Activated CD4-positive, alpha-beta T cell treated with anti-CD3 and anti-CD28 coated beads for 36 hours (primary cell): ENCODE measurements at regions of chr6 and their contacts with region 1.

Region 1: DNA sequence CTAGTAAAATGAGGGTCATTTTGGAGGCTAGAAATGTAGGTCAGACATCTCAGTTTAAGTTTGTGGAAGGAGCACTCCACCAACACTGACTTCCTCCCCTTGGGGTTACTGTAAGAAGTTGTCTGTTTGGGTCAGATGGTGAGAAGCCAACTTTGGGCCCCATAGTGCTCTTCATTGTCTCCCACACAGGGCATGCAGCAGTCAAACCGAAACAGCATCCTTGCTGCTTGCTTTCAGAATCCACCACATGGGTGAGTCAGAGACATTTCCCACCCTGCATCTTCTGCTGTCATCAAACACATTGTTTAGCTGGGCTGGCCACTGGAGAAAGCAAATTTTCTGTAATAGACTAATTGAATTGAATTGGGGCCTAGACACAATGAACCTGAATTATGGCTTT is 16.8 kb downstream of the IL17F start:
- DNase-seq: peak; percentile 88
- ATAC-seq: peak; percentile 95
- H3K4me3 Mint-ChIP-seq: no peak overlapping the region
- H3K27ac Mint-ChIP-seq: no peak overlapping the region
- H3K4me1 Mint-ChIP-seq: peaks cover 35% of the 10 kb centered on the region
- H3K27me3 Mint-ChIP-seq: peaks cover 41% of the 10 kb centered on the region

Region 2: DNA sequence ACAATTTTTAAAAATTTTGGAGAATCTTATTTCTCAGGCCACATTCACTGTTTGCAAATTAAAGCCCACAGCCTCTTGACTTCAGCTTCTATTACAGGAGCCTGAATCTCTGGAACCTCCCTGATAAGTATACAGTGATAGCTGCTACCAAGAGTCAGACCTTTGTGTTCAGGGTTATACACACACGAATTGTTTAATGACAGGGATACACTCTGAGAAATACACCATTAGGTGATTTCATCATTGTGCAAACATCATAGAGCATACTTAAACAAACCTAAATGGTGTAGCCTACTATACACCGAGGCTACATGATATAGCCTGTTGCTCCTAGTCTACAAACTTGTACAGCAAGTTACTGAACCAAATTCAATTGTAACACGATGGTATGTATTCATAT is 613.9 kb before region 1 on chr6:
- CTCF ChIA-PET with region 1: no interaction called
- POLR2A ChIA-PET with region 1: no interaction called
- intact Hi-C with region 1: no loop called
- DNase-seq: no peak
- ATAC-seq: no peak
- H3K4me3 Mint-ChIP-seq: no peak overlapping the region
- H3K27ac Mint-ChIP-seq: no peak overlapping the region
- H3K4me1 Mint-ChIP-seq: no peaks in the 10 kb centered on the region
- H3K27me3 Mint-ChIP-seq: no peaks in the 10 kb centered on the region

Region 3: DNA sequence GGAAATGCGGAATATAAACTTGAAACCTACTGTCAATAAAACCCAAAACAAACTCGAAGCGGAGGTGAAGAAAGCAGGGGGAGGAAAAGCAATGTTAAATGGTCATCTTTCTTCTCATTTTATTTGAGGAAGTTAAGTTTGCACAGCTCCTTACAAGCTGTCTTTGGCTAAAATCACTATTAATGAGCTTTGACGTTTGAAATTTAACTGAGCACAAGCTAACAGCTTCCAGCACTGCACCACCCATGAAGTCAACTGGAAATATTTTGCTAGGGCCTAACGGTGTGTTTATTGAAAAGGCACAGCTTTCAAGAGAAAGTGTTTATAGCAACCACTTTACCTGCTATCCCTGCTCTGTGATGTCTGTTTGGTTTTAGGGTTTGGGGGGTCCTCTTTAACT is 243.9 kb before region 1 on chr6:
- CTCF ChIA-PET with region 1: no interaction called
- POLR2A ChIA-PET with region 1: no interaction called
- intact Hi-C with region 1: no loop called
- DNase-seq: no peak
- ATAC-seq: no peak
- H3K4me3 Mint-ChIP-seq: no peak overlapping the region
- H3K27ac Mint-ChIP-seq: no peak overlapping the region
- H3K4me1 Mint-ChIP-seq: no peaks in the 10 kb centered on the region
- H3K27me3 Mint-ChIP-seq: peaks cover 2% of the 10 kb centered on the region

Region 4: DNA sequence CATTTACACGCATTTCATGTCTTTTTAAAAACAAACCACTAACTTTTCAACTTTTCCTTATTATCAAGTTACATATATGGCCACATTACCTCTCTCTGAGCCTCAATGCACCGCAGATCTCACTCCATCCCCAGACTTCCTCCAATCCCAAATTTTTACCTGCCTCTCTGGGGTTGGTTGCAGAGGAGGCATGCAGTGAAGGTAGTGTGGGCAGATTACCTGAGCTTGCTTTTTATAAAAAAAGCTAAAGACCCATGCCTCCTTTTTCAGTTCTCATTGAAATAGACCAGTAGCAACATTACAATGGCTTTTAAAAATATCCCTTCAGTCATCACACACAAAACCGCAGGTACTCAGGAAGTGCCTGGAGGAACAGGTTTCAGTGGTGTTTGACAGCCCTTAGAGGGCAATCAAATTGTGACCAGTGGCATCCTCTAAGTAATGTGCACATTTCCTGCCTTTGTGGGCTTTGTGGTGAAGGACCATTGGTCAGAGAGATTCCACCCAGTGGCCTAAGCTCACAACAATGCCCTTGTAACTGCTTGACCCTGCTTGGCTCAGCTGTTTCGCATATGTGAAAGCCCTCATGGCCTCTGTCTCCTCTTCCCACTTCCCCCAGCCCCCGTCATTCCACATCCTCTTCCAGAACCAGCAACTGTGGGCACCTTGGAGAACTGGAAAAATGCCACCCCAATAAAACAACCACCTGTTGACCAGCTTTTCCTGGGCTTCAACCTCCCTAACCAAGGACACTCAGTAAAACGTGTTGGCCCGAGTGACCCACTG is 71.5 kb before region 1 on chr6:
- CTCF ChIA-PET with region 1: interaction called, 7 read pairs
- POLR2A ChIA-PET with region 1: no interaction called
- intact Hi-C with region 1: loop called (anchors 1 kb)
- DNase-seq: peak; percentile 16
- ATAC-seq: no peak
- H3K4me3 Mint-ChIP-seq: peak overlapping the region; percentile 9
- H3K27ac Mint-ChIP-seq: peak overlapping the region; percentile 97
- H3K4me1 Mint-ChIP-seq: peaks cover 54% of the 10 kb centered on the region
- H3K27me3 Mint-ChIP-seq: peaks cover 10% of the 10 kb centered on the region

Region 5: GRCh38 chr6:52201046-52201445 is 26.4 kb before region 1 on chr6:
- CTCF ChIA-PET with region 1: no interaction called
- POLR2A ChIA-PET with region 1: no interaction called
- intact Hi-C with region 1: loop called in 1 of 2 experiments (anchors 1 kb)
- DNase-seq: no peak
- ATAC-seq: peak; percentile 92
- H3K4me3 Mint-ChIP-seq: no peak overlapping the region
- H3K27ac Mint-ChIP-seq: peak overlapping the region; percentile 67
- H3K4me1 Mint-ChIP-seq: peaks cover 17% of the 10 kb centered on the region
- H3K27me3 Mint-ChIP-seq: peaks cover 28% of the 10 kb centered on the region

Region 6: DNA sequence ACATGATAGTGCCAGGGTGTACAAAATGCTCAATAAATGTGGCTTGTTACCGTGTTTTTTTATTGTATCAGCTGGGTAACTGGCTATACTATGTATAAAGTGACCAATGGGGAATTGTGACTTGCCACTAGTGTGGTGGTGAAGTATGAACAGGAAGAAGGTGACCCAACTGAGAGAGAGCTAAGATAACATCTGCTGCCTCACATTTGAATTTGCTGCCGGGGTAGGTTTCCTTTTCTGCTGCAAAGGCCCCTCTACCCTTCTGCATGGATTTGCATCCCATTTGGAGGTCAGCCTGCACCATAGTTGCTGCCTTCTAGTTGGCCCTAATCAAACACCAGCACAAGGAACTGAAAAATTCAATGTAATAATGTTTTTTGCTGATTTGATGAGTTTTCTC is 17.3 kb before region 1 on chr6:
- CTCF ChIA-PET with region 1: interaction called, 3 read pairs
- POLR2A ChIA-PET with region 1: no interaction called
- intact Hi-C with region 1: loop called (anchors 1 to 2 kb)
- DNase-seq: no peak
- ATAC-seq: peak; percentile 14
- H3K4me3 Mint-ChIP-seq: no peak overlapping the region
- H3K27ac Mint-ChIP-seq: peak overlapping the region; percentile 44
- H3K4me1 Mint-ChIP-seq: peaks cover 22% of the 10 kb centered on the region
- H3K27me3 Mint-ChIP-seq: peaks cover 10% of the 10 kb centered on the region

Region 7: GRCh38 chr6:52253494-52253893 is 26.0 kb after region 1 on chr6:
- CTCF ChIA-PET with region 1: no interaction called
- POLR2A ChIA-PET with region 1: interaction called, 8 read pairs
- intact Hi-C with region 1: loop called (anchors 1 kb)
- DNase-seq: peak; percentile 76
- ATAC-seq: peak; percentile 53
- H3K4me3 Mint-ChIP-seq: no peak overlapping the region
- H3K27ac Mint-ChIP-seq: peak overlapping the region; percentile 72
- H3K4me1 Mint-ChIP-seq: peaks cover 48% of the 10 kb centered on the region
- H3K27me3 Mint-ChIP-seq: peaks cover 22% of the 10 kb centered on the region

Region 8: GRCh38 chr6:52389626-52390360 is 162.3 kb after region 1 on chr6:
- CTCF ChIA-PET with region 1: no interaction called
- POLR2A ChIA-PET with region 1: no interaction called
- intact Hi-C with region 1: loop called (anchors 2 to 5 kb)
- DNase-seq: peak; percentile 74
- ATAC-seq: peak; percentile 52
- H3K4me3 Mint-ChIP-seq: peak overlapping the region; percentile 38
- H3K27ac Mint-ChIP-seq: peak overlapping the region; percentile 86
- H3K4me1 Mint-ChIP-seq: peaks cover 85% of the 10 kb centered on the region
- H3K27me3 Mint-ChIP-seq: no peaks in the 10 kb centered on the region